Activated CD4-positive, alpha-beta T cell treated with anti-CD3 and anti-CD28 coated beads, Interleukin-2, amount 10 ng/mL, durations not matched to agents 7 days and 5 days (primary cell): ENCODE measurements at regions of chr4 and their contacts with region 1.

Region 1: DNA sequence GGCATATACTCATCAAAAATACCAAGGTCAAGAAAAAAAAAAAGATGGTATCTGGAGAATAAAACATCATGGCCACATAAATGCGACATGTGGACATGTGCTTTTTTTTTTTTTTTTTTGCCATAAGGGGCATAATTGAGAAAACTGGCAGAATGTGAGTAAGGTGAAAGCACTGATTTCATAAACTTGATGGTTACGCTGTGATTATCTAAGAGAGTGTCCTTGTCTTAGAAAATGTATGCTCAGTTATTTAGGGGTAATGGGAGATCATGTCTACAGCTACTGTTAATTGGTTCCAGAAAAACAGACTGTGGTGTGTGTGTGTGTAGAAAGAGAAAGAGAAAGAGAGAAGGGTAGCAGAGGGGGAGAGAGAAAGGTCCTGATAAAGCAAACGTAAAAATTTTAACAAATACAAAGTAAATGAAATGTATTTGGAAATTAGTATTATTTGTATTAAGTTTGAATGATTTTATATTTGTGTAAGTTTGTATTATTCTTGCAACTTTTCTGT is 8.1 kb downstream of the DNAJB14 start:
- DNase-seq: no peak
- H3K4me3 Mint-ChIP-seq: no peak overlapping the region
- H3K27ac Mint-ChIP-seq: no peak overlapping the region
- H3K4me1 Mint-ChIP-seq: peaks cover 26% of the 10 kb centered on the region
- H3K27me3 Mint-ChIP-seq: no peaks in the 10 kb centered on the region

Region 2: GRCh38 chr4:99462875-99463464 is 475.3 kb before region 1 on chr4:
- CTCF ChIA-PET with region 1: no interaction called
- POLR2A ChIA-PET with region 1: no interaction called
- DNase-seq: peak; percentile 51
- H3K4me3 Mint-ChIP-seq: no peak overlapping the region
- H3K27ac Mint-ChIP-seq: no peak overlapping the region
- H3K4me1 Mint-ChIP-seq: no peaks in the 10 kb centered on the region
- H3K27me3 Mint-ChIP-seq: peaks cover 21% of the 10 kb centered on the region

Region 3: DNA sequence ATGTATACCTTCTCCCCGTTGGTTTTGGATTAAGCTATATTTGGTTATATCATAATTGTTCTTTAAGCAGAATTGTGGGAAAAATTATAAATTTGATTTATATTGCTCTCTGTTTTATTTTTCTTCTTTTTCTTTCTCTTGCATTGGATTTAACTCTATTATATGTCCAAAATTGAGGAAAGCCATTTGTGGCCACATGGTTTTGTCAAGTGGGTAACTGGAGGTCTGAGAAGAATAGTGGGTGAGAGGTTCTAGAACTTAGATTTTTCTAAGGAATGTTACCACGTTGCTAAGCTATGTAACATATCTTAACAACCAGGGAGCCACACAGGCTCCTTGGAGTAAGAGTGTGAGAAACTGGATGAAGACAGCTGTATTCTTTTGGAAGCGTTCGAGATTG is 427.6 kb before region 1 on chr4 and contains the start of gene C4orf17:
- CTCF ChIA-PET with region 1: interaction called, 10 read pairs
- POLR2A ChIA-PET with region 1: no interaction called
- DNase-seq: no peak
- H3K4me3 Mint-ChIP-seq: no peak within 1 kb of the TSS
- H3K27ac Mint-ChIP-seq: no peak within 1 kb of the TSS
- H3K4me1 Mint-ChIP-seq: peaks cover 31% of the 10 kb centered on the region
- H3K27me3 Mint-ChIP-seq: no peaks in the 10 kb centered on the region
- total RNA-seq, gene C4orf17: not detected